CD4-positive, alpha-beta T cell (primary cell): ENCODE measurements at regions of chr17 and their contacts with region 1.

Region 1: GRCh38 chr17:27455914-27456680 is at the start of gene KSR1:
- DNase-seq: peak; percentile 66 to 92 (median 77)
- ATAC-seq: peak; percentile 92
- H3K4me3 ChIP-seq: peak within 1 kb of the TSS; percentile 82
- H3K4me3 Mint-ChIP-seq: peak within 1 kb of the TSS; percentile 87
- H3K27ac ChIP-seq: no peak within 1 kb of the TSS
- H3K27ac Mint-ChIP-seq: peak within 1 kb of the TSS; percentile 60
- H3K4me1 ChIP-seq: peaks cover 32% of the 10 kb centered on the region
- H3K4me1 Mint-ChIP-seq: peaks cover 16% of the 10 kb centered on the region
- H3K27me3 ChIP-seq: no peaks in the 10 kb centered on the region
- H3K27me3 Mint-ChIP-seq: no peaks in the 10 kb centered on the region
- CTCF ChIP-seq: peak; percentile 46
- total RNA-seq, gene KSR1: 19.4 to 25.3 TPM

Region 2: DNA sequence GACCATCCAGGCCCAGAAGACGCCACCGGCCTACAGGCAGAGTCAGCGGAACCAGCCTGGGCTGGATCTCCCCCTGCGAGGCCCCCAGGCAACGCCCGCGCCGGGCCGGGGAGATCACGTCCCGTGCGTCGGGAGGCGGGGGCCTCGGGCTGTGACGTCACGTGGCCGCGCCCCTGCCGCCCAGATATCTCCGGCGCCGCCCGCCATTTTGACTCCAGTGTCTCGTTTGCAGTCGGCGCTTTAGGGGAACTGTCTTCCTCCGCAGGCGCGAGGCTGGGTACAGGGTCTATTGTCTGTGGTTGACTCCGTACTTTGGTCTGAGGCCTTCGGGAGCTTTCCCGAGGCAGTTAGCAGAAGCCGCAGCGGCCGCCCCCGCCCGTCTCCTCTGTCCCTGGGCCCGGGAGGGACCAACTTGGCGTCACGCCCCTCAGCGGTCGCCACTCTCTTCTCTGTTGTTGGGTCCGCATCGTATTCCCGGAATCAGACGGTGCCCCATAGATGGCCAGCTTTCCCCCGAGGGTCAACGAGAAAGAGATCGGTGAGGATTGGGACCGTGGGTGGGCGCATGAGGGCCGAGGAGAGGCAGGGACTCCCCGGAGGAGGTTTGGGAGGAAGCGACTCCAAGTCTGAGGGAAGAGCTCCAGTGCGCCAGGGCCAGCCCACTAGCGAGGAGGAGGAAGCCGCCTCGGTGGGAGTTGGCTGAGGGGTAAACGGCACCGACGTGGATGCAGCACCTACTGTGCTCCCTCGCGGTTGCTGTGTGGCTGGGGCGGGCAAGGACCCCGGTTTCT is 162.0 kb before region 1 on chr17 and contains the start of gene WSB1:
- CTCF ChIA-PET with region 1: interaction called, 3 read pairs
- POLR2A ChIA-PET with region 1: interaction called, 23 read pairs
- intact Hi-C with region 1: loop called in 1 of 2 experiments (anchors 2 kb)
- DNase-seq: peak; percentile 86 to 97 (median 92)
- ATAC-seq: peak; percentile 80
- H3K4me3 ChIP-seq: peak within 1 kb of the TSS; percentile 71
- H3K4me3 Mint-ChIP-seq: peak within 1 kb of the TSS; percentile 98
- H3K27ac ChIP-seq: peak within 1 kb of the TSS; percentile 97 to 99
- H3K27ac Mint-ChIP-seq: peak within 1 kb of the TSS; percentile 96
- H3K4me1 ChIP-seq: peaks cover 36% of the 10 kb centered on the region
- H3K4me1 Mint-ChIP-seq: peaks cover 44% of the 10 kb centered on the region
- H3K27me3 ChIP-seq: no peaks in the 10 kb centered on the region
- H3K27me3 Mint-ChIP-seq: no peaks in the 10 kb centered on the region
- CTCF ChIP-seq: no peak
- total RNA-seq, gene WSB1: 99.4 to 104 TPM

Region 3: DNA sequence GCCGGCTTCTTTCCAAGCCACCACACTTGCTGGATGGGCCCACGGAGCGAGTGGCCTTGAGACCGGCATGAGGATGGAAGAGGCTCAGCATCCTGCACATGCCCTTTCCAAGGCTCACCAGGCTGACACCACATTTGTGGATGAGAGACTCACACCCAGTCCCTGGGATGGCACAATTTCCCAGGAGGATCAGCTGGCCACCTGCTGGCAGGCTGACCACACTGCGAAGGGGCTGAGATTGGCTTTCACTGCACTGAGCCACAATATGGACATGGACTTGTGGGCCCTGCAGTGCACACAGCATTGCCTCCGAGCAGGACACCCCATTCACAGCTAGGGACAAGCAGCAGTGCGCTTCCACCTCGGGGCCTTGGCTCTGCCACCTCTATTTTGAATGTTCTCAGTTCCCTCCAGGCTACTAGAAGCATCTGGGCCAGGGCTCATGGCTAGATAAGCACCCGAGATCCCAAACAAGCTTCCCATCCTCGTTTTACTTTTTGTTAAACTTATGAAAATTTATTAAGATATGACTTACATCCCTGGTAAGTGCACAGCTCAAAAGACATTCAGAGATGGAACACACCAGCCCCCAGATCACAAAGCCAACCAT is 25.1 kb before region 1 on chr17:
- CTCF ChIA-PET with region 1: no interaction called
- POLR2A ChIA-PET with region 1: no interaction called
- intact Hi-C with region 1: no loop called
- DNase-seq: peak in 3 of 14 experiments; percentile 12 to 36 (median 22)
- ATAC-seq: no peak
- H3K4me3 ChIP-seq: no peak overlapping the region
- H3K4me3 Mint-ChIP-seq: no peak overlapping the region
- H3K27ac ChIP-seq: no peak overlapping the region
- H3K27ac Mint-ChIP-seq: no peak overlapping the region
- H3K4me1 ChIP-seq: no peaks in the 10 kb centered on the region
- H3K4me1 Mint-ChIP-seq: no peaks in the 10 kb centered on the region
- H3K27me3 ChIP-seq: no peaks in the 10 kb centered on the region
- H3K27me3 Mint-ChIP-seq: no peaks in the 10 kb centered on the region
- CTCF ChIP-seq: no peak

Region 4: GRCh38 chr17:27442702-27443101 is 13.4 kb before region 1 on chr17:
- CTCF ChIA-PET with region 1: no interaction called
- POLR2A ChIA-PET with region 1: no interaction called
- intact Hi-C with region 1: no loop called
- DNase-seq: no peak
- ATAC-seq: no peak
- H3K4me3 ChIP-seq: no peak overlapping the region
- H3K4me3 Mint-ChIP-seq: no peak overlapping the region
- H3K27ac ChIP-seq: no peak overlapping the region
- H3K27ac Mint-ChIP-seq: no peak overlapping the region
- H3K4me1 ChIP-seq: no peaks in the 10 kb centered on the region
- H3K4me1 Mint-ChIP-seq: no peaks in the 10 kb centered on the region
- H3K27me3 ChIP-seq: no peaks in the 10 kb centered on the region
- H3K27me3 Mint-ChIP-seq: no peaks in the 10 kb centered on the region
- CTCF ChIP-seq: no peak

Region 5: DNA sequence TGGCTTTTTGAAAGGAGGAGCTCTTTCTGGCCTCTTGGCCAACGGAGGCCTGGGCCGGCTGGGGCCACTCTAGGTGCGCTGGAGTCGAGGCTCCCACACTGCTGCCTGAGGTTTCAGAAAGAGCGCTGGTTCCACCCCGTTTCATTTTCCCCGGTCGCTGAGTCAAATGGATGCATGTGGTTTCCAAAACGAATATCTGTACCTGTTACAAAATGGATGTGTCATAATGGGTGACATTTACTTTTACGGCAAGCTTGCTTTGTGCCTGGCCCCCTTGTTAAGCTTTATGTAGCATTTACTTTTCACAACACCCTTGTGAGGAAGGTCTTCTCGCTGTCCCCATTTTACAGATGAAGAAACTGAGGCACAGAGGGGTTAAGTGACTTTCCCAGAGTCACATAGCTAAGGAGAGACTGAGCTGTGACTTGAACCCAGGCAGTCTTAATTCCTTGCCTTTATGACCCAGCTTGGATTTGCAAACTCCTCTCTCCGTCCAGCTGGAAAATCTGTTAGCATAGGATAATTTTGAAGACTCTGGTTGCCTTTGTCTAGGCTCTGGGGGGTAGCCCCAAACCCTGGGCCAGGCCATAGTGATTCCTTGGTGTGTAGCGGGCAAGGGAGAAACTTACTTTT is 10.8 kb after region 1 on chr17:
- CTCF ChIA-PET with region 1: interaction called, 29 read pairs
- POLR2A ChIA-PET with region 1: interaction called, 29 read pairs
- intact Hi-C with region 1: loop called in 1 of 2 experiments (anchors 2 kb)
- DNase-seq: peak in 10 of 14 experiments; percentile 9 to 70 (median 40)
- ATAC-seq: peak; percentile 81
- H3K4me3 ChIP-seq: peak overlapping the region; percentile 32
- H3K4me3 Mint-ChIP-seq: peak overlapping the region; percentile 80
- H3K27ac ChIP-seq: no peak overlapping the region
- H3K27ac Mint-ChIP-seq: peak overlapping the region; percentile 72
- H3K4me1 ChIP-seq: peaks cover 35% of the 10 kb centered on the region
- H3K4me1 Mint-ChIP-seq: peaks cover 61% of the 10 kb centered on the region
- H3K27me3 ChIP-seq: no peaks in the 10 kb centered on the region
- H3K27me3 Mint-ChIP-seq: no peaks in the 10 kb centered on the region
- CTCF ChIP-seq: no peak

Region 6: DNA sequence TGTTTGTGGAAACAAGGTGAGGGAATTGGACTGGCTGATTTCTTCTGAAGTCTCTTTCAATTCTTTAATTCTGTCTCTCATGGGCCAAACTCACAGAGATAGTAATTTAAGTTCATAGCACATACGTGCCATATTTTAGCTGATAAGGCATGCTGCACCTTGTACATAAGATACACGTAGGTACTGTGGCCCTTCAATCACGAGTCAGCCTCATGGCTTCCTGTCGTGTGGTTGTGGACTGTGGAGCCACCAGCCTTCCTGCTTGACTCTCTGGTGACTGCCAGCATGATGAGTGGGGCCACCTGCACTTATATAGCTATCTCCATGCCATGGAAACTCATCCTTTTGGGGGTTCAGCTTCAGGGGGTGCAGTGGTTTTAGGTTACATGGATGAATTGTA is 25.2 kb after region 1 on chr17:
- CTCF ChIA-PET with region 1: interaction called, 6 read pairs
- POLR2A ChIA-PET with region 1: interaction called, 4 read pairs
- intact Hi-C with region 1: loop called in 1 of 2 experiments (anchors 1 kb)
- DNase-seq: peak; percentile 21 to 80 (median 44)
- ATAC-seq: peak; percentile 99
- H3K4me3 ChIP-seq: no peak overlapping the region
- H3K4me3 Mint-ChIP-seq: peak overlapping the region; percentile 8
- H3K27ac ChIP-seq: no peak overlapping the region
- H3K27ac Mint-ChIP-seq: peak overlapping the region; percentile 79
- H3K4me1 ChIP-seq: peaks cover 38% of the 10 kb centered on the region
- H3K4me1 Mint-ChIP-seq: peaks cover 44% of the 10 kb centered on the region
- H3K27me3 ChIP-seq: no peaks in the 10 kb centered on the region
- H3K27me3 Mint-ChIP-seq: no peaks in the 10 kb centered on the region
- CTCF ChIP-seq: no peak

Region 7: GRCh38 chr17:27569257-27569722 is 113.2 kb after region 1 on chr17:
- CTCF ChIA-PET with region 1: no interaction called
- POLR2A ChIA-PET with region 1: no interaction called
- intact Hi-C with region 1: loop called in 1 of 2 experiments (anchors 1 kb)
- DNase-seq: peak in 8 of 14 experiments; percentile 10 to 73 (median 35)
- ATAC-seq: peak; percentile 80
- H3K4me3 ChIP-seq: no peak overlapping the region
- H3K4me3 Mint-ChIP-seq: no peak overlapping the region
- H3K27ac ChIP-seq: no peak overlapping the region
- H3K27ac Mint-ChIP-seq: no peak overlapping the region
- H3K4me1 ChIP-seq: peaks cover 3% of the 10 kb centered on the region
- H3K4me1 Mint-ChIP-seq: no peaks in the 10 kb centered on the region
- H3K27me3 ChIP-seq: no peaks in the 10 kb centered on the region
- H3K27me3 Mint-ChIP-seq: no peaks in the 10 kb centered on the region
- CTCF ChIP-seq: no peak

Region 8: DNA sequence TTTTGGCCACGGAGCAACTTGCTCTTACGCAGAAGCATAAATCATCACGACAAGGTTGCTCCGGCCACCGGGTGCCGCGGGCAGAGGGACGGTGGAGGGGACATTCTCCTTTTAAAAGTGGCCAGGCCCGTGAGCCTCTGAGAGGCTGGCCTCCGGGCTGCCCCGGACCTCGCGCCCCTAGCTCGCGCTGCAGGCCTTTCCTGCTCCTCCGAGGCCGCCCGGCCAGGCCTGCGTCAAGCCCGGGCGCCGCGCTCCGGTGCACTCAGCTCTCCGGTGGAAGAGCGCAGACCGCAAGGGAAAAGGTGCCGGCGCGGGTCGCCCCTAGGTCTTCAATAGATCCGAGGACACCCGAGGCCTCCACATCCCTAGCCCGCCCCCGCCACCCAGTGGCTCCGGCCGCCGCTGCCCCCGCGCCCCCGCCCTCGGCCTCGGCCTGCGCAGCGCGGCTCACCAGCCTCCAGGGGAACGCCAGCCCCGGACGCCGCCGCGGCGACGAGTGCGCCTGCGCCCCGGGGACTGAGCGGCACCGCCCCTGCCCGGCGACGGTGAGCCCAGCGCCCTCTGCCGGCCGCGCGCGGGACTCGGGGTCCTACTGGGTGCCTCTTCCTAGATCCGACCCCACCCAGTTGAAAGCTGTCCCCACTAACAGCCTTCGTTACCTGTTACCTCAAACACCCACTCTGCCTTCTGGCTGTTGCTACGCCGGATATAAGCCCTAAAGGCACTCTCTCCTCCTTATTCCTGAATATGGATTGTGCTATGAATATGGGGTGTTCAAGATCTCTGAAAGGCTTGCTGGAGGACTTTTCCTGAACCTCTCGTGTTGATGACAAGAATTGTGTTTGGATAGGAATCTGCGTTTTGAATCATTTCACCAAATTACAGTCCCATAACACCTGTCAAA is 437.0 kb after region 1 on chr17 and contains the start of gene LYRM9:
- CTCF ChIA-PET with region 1: no interaction called
- POLR2A ChIA-PET with region 1: interaction called, 4 read pairs
- intact Hi-C with region 1: loop called in 1 of 2 experiments (anchors 10 kb)
- DNase-seq: peak; percentile 85 to 97 (median 93)
- ATAC-seq: peak; percentile 98
- H3K4me3 ChIP-seq: peak within 1 kb of the TSS; percentile 73
- H3K4me3 Mint-ChIP-seq: peak within 1 kb of the TSS; percentile 90
- H3K27ac ChIP-seq: no peak within 1 kb of the TSS
- H3K27ac Mint-ChIP-seq: peak within 1 kb of the TSS; percentile 58
- H3K4me1 ChIP-seq: peaks cover 16% of the 10 kb centered on the region
- H3K4me1 Mint-ChIP-seq: peaks cover 27% of the 10 kb centered on the region
- H3K27me3 ChIP-seq: peaks cover 0 to 7% of the 10 kb centered on the region in 2 experiments
- H3K27me3 Mint-ChIP-seq: peaks cover 31% of the 10 kb centered on the region
- CTCF ChIP-seq: peak; percentile 82
- total RNA-seq, gene LYRM9: 13.0 to 15.7 TPM